ENCODE measurements at regions of chr16 and their contacts with region 1.

Region 1: DNA sequence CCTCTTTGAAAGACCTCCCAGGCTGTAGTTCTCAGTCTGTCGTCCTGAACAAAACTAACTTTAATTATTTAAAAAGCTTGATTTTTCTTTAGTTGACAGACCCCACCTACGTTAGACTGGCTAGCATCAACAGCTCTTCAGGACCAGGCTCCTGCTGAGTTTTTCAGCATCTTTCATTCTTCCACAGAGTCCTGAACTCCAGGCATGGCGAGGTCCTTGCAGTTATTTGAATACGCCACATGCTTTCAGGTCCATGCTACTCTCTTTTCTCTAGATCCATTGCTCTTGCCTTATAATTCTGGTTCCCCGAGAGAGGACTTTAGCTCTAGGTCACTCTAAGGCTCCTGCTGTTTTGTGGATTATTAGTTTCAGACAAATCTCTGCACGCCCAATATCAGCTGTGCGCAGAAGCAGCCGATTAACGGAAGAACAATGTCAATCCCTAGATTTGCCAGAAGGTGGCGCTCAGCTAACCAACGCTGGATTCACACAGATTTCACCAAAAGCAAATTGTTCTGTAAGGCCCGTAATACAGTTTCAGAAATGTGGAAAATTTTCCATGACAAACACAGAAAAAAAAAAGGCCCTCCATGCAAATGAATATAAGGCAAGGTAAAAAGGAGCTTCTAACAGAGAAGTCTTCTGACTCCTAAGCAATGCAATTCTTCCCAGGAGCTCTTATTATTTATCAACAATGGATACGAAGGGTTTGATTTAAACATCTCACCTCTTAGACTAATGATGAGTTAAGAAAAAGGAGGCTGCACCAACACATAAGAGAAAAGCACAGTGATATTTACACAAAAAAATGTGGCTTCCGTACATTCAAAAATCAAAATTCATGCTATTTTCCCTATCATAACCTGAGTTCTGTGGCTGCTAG is 33.5 kb upstream of the BCO1 start:
- DNase-seq: peak; percentile 76
- H3K4me3 ChIP-seq: no peak overlapping the region
- H3K27ac ChIP-seq: no peak overlapping the region
- H3K4me1 ChIP-seq: no peaks in the 10 kb centered on the region
- H3K27me3 ChIP-seq: no peaks in the 10 kb centered on the region
- CTCF ChIP-seq: peak; percentile 19 to 74 (median 61)
- EP300 ChIP-seq: no peak
- POLR2A ChIP-seq: no peak

Region 2: DNA sequence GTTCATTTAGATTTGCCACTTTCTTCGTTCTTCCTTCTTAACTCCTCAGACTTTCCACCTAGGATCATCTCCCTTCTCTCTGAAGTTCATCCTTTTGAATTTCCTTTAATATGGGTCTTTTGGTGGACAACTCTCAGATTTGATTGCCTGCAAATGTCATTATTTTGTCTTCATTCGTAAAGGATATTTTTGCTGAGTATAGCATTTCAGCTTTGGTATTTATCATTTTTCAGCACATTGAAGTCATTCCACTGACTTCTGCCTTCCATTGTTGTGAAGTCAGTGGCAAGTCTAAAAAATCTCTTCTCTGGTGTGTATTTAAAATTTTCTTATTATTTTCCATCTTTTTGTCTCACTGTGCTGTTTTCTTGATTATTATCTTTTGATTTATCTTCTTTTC is 155.1 kb after region 1 on chr16:
- intact Hi-C with region 1: loop called (anchors 5 kb)
- DNase-seq: no peak
- H3K4me3 ChIP-seq: no peak overlapping the region
- H3K27ac ChIP-seq: no peak overlapping the region
- H3K4me1 ChIP-seq: peaks cover 0 to 14% (median 8%) of the 10 kb centered on the region in 4 donors
- H3K27me3 ChIP-seq: no peaks in the 10 kb centered on the region
- CTCF ChIP-seq: no peak
- EP300 ChIP-seq: no peak
- POLR2A ChIP-seq: no peak

Region 3: GRCh38 chr16:81737885-81738786 is 533.1 kb after region 1 on chr16:
- intact Hi-C with region 1: loop called (anchors 10 kb)
- DNase-seq: peak; percentile 89
- H3K4me3 ChIP-seq: peak overlapping the region in 2 of 4 donors; percentile 22 to 32
- H3K27ac ChIP-seq: peak overlapping the region in 2 of 4 donors; percentile 40 to 47
- H3K4me1 ChIP-seq: peaks cover 0 to 11% (median 10%) of the 10 kb centered on the region in 4 donors
- H3K27me3 ChIP-seq: no peaks in the 10 kb centered on the region
- CTCF ChIP-seq: peak; percentile 78 to 85 (median 82)
- EP300 ChIP-seq: no peak
- POLR2A ChIP-seq: no peak